Mammary epithelial cell (primary cell): ENCODE measurements at regions of chr5 and their contacts with region 1.

Region 1: DNA sequence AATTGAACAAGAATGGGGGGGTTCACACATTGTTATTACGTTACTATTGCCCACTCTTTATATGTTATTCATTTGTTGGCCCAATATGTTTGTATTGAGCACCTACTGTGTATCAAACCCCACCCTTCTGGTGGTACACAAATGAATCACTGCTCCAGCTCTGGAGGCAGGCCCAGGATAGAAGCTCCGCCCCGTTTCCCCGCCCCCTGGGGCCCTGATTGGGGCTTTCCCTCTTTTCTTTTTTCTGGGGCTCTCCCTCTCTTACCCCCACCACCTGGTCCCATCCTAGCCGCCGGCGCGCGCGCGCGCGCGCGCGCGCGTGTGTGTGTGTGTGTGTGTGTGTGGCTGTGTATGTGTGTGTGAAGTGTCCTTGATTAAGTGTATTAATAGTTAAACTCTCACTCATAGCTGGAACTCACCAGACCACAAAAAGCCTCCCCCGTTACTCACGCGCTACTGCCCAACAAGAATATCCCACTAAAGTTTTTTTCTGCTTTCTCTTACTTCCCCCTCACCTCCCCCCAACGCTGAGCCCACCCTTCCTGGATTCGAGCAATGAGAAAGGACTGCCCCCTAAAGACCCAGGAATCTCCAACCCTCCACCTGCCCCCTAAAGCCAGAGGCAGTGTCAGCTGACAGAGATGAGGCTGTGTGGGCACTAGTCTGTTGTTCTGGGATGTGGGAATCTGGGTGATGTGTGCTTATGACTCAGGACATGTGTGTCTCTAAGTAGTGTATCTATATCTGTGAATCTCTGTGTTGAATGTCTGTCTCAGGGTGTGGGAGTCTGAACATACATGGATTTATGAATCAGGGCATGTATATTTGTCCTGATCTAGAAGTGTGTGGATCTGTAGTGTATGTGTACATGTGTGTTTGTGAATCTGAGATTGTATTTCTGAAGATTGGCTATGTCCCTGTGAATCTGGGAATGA is 4.0 kb downstream of the CXXC5 start:
- DNase-seq: peak; percentile 92
- H3K4me3 ChIP-seq: peak overlapping the region; percentile 6 to 23 (median 21)
- H3K27ac ChIP-seq: peak overlapping the region; percentile 74
- H3K4me1 ChIP-seq: peaks cover 56% of the 10 kb centered on the region
- H3K27me3 ChIP-seq: no peaks in the 10 kb centered on the region
- CTCF ChIP-seq: no peak

Region 2: DNA sequence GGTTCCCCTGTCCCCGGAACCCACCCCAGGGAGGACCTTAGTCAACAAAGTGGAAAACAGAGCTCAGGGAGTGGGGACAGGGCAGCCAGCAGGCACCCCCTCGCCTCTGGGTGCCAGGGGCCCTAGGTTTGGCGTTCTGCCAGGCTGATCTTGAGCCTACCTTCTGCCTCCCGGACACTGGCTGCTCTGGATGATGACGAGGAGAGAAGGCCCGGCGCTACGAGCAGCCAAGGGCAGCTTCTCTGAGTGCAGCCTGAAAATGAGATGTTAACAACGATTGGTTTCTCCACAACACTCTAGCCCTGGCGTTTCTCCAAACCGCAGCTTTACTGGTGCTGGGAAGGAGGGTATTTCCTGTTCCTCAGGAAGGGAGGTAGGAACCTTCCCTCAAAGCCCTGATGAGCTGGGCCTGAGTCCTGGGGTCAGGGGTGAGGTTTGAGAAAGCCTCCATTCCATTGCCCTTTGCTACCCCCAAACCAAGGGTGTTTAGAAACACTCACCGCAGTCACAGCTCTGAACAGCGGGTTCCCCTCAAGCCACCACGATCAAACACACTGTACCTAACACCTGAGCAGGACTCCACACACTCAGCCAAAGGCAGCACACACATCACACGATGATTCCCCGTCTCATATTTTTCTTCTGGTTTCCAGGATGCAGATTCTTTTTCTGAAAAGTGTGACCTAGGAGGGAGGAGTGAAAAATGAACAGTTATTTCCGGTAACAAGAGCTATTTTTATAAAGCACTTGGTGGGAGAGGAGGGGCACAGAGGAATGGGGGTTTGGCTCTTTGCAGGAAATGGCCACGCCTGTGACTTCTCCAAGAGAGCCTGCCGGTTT is 169.8 kb before region 1 on chr5 and contains the start of gene STING1:
- CTCF ChIA-PET with region 1: no interaction called
- dilution Hi-C with region 1: no loop called
- in situ Hi-C with region 1: no loop called
- intact Hi-C with region 1: no loop called
- DNase-seq: peak; percentile 97
- H3K4me3 ChIP-seq: peak within 1 kb of the TSS; percentile 19 to 44 (median 37)
- H3K27ac ChIP-seq: peak within 1 kb of the TSS; percentile 58
- H3K4me1 ChIP-seq: peaks cover 22% of the 10 kb centered on the region
- H3K27me3 ChIP-seq: no peaks in the 10 kb centered on the region
- CTCF ChIP-seq: no peak
- total RNA-seq, gene STING1: 10.7 to 36.6 TPM

Region 3: DNA sequence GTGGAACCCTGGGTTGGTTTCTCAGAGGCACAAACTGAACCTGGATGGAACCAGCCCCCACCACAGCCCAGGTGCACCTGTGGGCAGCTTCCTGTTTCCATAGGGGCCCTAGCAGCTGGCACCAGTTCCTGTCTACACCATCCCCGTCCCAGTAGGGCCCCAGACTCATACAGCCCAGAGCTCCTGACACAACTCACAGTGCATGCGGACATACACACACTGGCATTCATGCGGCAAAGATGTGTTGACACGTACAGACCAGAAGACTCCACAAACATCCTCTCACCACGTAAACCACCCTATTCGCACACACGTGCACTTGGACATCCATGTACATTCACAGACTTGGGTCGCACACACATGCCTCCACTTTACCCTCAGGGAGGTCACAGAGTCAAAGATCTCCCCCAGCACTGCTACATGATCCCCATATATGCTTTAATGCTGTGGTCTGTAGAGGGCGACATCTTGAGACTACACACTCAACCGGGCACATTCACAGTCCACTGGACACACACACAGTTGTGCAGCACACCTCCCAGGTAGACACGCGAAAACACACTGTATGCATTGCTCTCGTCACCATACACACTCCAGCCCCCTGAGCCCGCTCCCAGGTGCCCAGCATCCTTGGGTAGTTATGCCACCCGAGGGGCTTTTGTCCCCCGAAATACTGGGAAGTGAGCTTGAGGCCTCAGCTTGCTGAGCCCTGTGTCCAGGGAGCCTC is 18.4 kb after region 1 on chr5:
- CTCF ChIA-PET with region 1: interaction called, 4 read pairs
- dilution Hi-C with region 1: no loop called
- in situ Hi-C with region 1: no loop called
- intact Hi-C with region 1: loop called (anchors 1 kb)
- DNase-seq: no peak
- H3K4me3 ChIP-seq: no peak overlapping the region
- H3K27ac ChIP-seq: no peak overlapping the region
- H3K4me1 ChIP-seq: peaks cover 57% of the 10 kb centered on the region
- H3K27me3 ChIP-seq: no peaks in the 10 kb centered on the region
- CTCF ChIP-seq: peak in 1 of 2 donors; percentile 53

Region 4: GRCh38 chr5:139711067-139711905 is 59.2 kb after region 1 on chr5:
- CTCF ChIA-PET with region 1: no interaction called
- dilution Hi-C with region 1: loop called (anchors 10 kb)
- in situ Hi-C with region 1: no loop called
- intact Hi-C with region 1: no loop called
- DNase-seq: peak; percentile 38
- H3K4me3 ChIP-seq: peak overlapping the region; percentile 42 to 51 (median 46)
- H3K27ac ChIP-seq: no peak overlapping the region
- H3K4me1 ChIP-seq: peaks cover 11% of the 10 kb centered on the region
- H3K27me3 ChIP-seq: no peaks in the 10 kb centered on the region
- CTCF ChIP-seq: no peak